Testis (tissue), 5 donors: ENCODE measurements at regions of chr1 and their contacts with region 1.

Region 1: GRCh38 chr1:214328770-214329469 is 48.0 kb downstream of the SMYD2 start:
- DNase-seq: peak; percentile 89
- H3K4me3 ChIP-seq: no peak overlapping the region
- H3K27ac ChIP-seq: no peak overlapping the region
- H3K4me1 ChIP-seq: peaks cover 4% of the 10 kb centered on the region
- H3K27me3 ChIP-seq: no peaks in the 10 kb centered on the region
- CTCF ChIP-seq: peak; percentile 63 to 83 (median 82)
- POLR2A ChIP-seq: no peak

Region 2: GRCh38 chr1:214192825-214193643 is 135.9 kb before region 1 on chr1:
- intact Hi-C with region 1: no loop called
- DNase-seq: peak; percentile 64
- H3K4me3 ChIP-seq: no peak overlapping the region
- H3K27ac ChIP-seq: peak overlapping the region; percentile 7 to 27
- H3K4me1 ChIP-seq: peaks cover 11% of the 10 kb centered on the region
- H3K27me3 ChIP-seq: no peaks in the 10 kb centered on the region
- CTCF ChIP-seq: no peak
- POLR2A ChIP-seq: no peak

Region 3: DNA sequence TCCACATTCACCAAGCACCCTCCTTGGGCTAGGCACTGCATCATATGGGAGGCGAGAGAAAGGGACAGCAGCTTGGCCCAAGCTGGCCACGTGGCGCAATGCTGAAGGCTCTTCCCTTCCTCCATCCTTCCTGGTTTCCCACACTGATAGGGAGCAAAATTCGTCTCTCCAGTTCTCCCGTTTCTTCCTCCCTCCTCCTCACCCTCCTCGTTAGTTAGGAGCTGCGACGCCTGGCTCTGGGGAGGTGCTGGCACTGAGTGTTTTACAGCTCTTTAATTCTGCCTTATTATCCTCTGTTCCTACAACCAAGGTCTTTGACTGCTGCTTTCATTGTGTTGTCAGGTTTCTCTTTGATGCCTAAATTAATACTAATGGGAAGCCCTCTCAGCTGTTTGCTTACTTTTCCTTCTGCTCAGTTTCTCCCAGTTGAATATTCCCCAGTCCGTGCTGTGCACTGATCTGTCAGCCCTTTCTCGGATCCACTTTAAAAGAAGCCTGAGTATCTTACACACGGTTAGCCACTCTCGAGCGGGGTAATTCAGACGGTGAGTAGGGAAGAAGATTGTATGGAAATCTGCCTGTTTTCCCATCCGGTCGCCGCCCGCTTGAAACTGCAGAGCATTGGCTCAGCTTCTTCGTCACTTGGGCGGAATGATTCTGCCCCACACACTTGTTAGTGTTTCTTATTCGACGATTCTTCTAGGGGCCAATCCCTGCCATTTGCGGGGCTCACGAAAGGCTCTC is 104.1 kb before region 1 on chr1:
- intact Hi-C with region 1: no loop called
- DNase-seq: peak; percentile 36
- H3K4me3 ChIP-seq: peak overlapping the region; percentile 2 to 40
- H3K27ac ChIP-seq: no peak overlapping the region
- H3K4me1 ChIP-seq: peaks cover 9% of the 10 kb centered on the region
- H3K27me3 ChIP-seq: no peaks in the 10 kb centered on the region
- CTCF ChIP-seq: no peak
- POLR2A ChIP-seq: no peak

Region 4: GRCh38 chr1:214261206-214262123 is 67.5 kb before region 1 on chr1:
- intact Hi-C with region 1: loop called (anchors 5 kb)
- DNase-seq: peak; percentile 92
- H3K4me3 ChIP-seq: no peak overlapping the region
- H3K27ac ChIP-seq: no peak overlapping the region
- H3K4me1 ChIP-seq: peaks cover 4% of the 10 kb centered on the region
- H3K27me3 ChIP-seq: no peaks in the 10 kb centered on the region
- CTCF ChIP-seq: peak; percentile 60 to 85 (median 67)
- POLR2A ChIP-seq: no peak

Region 5: DNA sequence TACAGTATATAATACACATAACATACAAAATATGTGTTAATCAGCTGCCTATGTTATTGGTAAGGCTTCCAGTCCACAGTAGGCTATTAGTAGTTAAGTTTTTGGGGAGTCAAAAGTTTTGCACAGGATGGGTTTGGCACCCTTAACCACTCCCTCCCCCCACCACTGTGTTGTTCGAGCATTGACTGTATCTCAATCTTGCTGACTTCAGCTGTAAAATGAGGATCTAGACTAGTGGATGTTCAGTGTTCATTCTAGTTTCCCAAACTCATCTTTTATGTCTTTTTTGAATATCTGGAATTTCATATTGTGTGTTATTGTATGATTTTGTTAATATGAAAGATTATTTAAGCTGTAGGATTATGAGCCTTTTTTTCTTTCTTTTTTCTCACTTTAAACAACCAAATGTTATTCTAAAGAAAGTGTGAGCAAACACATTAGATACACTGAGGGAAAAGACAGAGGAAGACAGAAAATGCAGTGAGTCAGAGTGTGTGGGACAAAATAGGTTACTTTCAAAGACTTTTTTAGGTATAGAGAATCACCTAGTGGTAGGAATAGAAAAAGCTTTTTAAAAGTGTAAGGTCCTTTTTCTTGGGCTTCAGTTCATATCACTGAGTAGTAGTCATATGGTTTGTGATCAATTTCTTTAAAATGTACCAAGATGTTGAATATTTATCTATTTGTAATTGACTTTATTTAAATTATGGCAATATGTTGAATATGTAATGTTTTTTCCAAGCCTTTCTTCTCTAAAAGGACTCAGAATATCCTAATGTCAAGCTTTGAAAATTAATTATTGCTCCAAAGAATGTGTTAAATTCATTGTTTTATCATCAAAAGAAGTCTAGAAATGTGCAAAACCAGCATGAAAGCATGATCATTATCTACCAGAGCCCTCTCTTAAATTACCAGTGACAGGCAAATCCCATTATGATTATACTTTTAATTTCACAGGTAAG is 256.2 kb after region 1 on chr1:
- intact Hi-C with region 1: loop called (anchors 5 kb)
- DNase-seq: no peak
- H3K4me3 ChIP-seq: no peak overlapping the region
- H3K27ac ChIP-seq: no peak overlapping the region
- H3K4me1 ChIP-seq: no peaks in the 10 kb centered on the region
- H3K27me3 ChIP-seq: no peaks in the 10 kb centered on the region
- CTCF ChIP-seq: peak; percentile 56 to 77 (median 59)
- POLR2A ChIP-seq: no peak